PC-9 (cell line): ENCODE measurements at regions of chr4 and their contacts with region 1.

Region 1: DNA sequence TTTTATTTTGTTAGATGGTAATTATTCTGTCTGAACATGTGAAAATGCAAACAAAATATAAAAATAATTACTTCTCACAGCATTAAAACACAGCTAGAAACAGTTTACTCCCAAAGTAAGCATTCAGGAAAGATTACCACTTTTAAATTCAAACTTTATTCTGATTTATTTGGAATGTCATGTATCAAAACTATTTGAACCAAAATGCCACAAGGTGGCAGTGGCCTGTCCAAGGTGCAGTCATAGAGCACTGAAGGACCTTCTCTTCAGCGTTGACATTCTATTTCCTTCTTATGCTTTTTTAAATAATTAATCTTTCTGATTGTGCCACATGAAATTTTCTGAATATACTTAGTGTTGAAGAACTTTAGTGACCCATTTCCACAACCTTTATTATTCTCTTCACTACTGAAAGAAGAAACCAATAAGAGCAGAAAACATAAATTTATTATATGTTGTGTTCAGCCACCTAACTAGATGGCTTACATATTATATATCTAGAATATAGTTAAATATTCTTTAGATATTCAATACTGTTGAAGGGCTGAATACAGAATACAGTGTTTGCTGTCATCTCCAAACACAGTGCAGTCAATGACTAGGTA is 283.6 kb downstream of the CFAP299 start:
- DNase-seq: no peak
- H3K4me3 ChIP-seq: no peak overlapping the region
- H3K27ac ChIP-seq: no peak overlapping the region
- H3K4me1 ChIP-seq: no peaks in the 10 kb centered on the region
- H3K27me3 ChIP-seq: no peaks in the 10 kb centered on the region
- CTCF ChIP-seq: peak; percentile 66

Region 2: GRCh38 chr4:80566203-80566872 is 52.8 kb before region 1 on chr4:
- CTCF ChIA-PET with region 1: no interaction called
- POLR2A ChIA-PET with region 1: no interaction called
- intact Hi-C with region 1: no loop called
- DNase-seq: no peak
- H3K4me3 ChIP-seq: no peak overlapping the region
- H3K27ac ChIP-seq: no peak overlapping the region
- H3K4me1 ChIP-seq: no peaks in the 10 kb centered on the region
- H3K27me3 ChIP-seq: no peaks in the 10 kb centered on the region
- CTCF ChIP-seq: no peak

Region 3: DNA sequence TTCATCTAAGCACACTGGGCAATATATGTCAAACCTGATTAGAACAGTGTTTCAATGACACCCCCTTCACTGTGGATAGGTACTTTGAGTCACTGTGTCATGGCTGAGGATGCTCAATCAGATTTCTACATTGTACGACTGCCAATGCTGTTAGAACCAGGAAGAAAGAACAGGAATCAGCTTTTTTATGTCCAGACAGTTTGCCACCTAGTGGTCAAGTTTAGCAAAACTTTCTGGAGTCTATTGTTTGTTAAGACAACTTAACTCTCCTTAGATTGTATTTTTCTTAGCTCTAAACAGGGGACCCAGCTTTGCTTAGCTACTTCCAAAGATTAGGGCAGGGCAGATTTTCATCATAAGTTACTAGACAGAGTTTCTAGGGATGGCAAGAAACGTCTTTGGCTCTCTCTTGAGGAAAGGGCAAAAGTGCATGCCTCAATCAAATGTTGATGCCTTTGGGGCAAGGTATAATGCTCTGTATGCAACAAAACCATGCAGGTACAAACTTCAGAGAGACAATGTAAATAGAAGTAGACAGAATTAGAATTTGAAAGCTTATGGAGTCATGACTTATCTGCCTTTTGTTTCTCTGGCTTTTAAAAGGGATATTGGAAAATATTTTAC is 370.9 kb after region 1 on chr4:
- CTCF ChIA-PET with region 1: no interaction called
- POLR2A ChIA-PET with region 1: no interaction called
- intact Hi-C with region 1: loop called (anchors 2 kb)
- DNase-seq: peak in 1 of 2 experiments; percentile 7
- H3K4me3 ChIP-seq: no peak overlapping the region
- H3K27ac ChIP-seq: no peak overlapping the region
- H3K4me1 ChIP-seq: no peaks in the 10 kb centered on the region
- H3K27me3 ChIP-seq: no peaks in the 10 kb centered on the region
- CTCF ChIP-seq: peak; percentile 76

Region 4: GRCh38 chr4:81030061-81030980 is 411.1 kb after region 1 on chr4 and contains the start of gene BMP3:
- CTCF ChIA-PET with region 1: no interaction called
- POLR2A ChIA-PET with region 1: no interaction called
- intact Hi-C with region 1: loop called (anchors 5 kb)
- DNase-seq: peak; percentile 20 to 48
- H3K4me3 ChIP-seq: peak within 1 kb of the TSS; percentile 63
- H3K27ac ChIP-seq: no peak within 1 kb of the TSS
- H3K4me1 ChIP-seq: 0 out of 2 replicates have a peak, but pooled peaks cover 6% of the 10 kb centered on the region
- H3K27me3 ChIP-seq: no peaks in the 10 kb centered on the region
- CTCF ChIP-seq: no peak
- total RNA-seq, gene BMP3: 0.41 and 0.50 TPM in 2 replicates